Body of pancreas (tissue), 4 donors: ENCODE measurements at regions of chr5 and their contacts with region 1.

Region 1: DNA sequence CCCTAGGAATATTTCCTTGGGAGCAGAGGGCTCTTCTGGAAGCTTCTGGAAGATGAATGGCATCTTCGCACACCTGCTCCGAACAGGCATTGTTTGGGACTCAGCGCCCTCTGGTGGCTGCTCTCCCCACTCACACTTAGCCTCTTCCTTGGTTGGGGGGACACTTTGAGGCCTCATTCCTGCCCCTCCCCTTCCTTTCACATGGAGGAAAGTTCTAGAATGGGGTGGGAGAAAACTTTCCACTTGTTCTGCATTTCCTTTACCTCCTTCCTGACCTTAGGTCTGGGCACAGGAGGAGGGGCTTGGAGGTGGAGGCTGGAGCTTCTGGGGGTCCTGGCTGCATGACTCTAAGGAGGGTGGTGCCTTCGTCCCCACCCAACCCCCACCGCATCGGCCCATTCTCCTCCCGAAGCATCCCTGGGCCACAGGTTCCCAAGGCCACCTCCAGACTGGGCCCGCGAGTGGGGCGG is 19.3 kb upstream of the SMIM32 start:
- DNase-seq: peak; percentile 46 to 69 (median 62)
- ATAC-seq: peak; percentile 67
- H3K4me3 ChIP-seq: no peak overlapping the region
- H3K27ac ChIP-seq: no peak overlapping the region
- H3K4me1 ChIP-seq: no peaks in the 10 kb centered on the region
- H3K27me3 ChIP-seq: peaks cover 0 to 4% of the 10 kb centered on the region in 2 donors
- CTCF ChIP-seq: peak; percentile 73 to 83 (median 78)
- POLR2A ChIP-seq: no peak

Region 2: DNA sequence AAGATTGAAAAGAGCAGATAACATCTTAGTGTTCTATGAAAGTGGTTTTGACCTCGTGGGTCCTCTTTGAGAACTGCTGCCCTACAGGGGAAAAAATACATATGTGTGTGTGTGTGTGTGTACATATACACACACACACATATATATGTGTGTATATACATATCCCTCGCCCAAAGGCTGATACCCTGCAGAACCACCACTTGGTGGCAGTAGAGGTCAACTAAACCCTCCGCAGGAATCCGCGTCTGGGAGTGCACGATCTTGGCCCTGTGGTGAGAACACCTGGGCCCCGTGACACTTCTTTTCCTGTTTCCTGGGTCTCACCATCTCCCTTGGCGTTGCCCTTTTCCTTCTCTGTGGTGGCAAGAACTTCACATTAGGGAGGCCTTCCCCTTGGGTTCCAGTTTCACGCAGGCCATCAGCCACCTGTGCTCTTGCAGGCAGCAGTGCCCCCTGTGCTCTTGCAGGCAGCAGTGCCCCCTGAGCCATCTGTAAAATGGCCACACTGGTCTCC is 324.9 kb before region 1 on chr5:
- intact Hi-C with region 1: loop called (anchors 5 kb)
- DNase-seq: peak; percentile 62 to 68 (median 65)
- ATAC-seq: peak; percentile 84
- H3K4me3 ChIP-seq: no peak overlapping the region
- H3K27ac ChIP-seq: no peak overlapping the region
- H3K4me1 ChIP-seq: peaks cover 19% of the 10 kb centered on the region
- H3K27me3 ChIP-seq: no peaks in the 10 kb centered on the region
- CTCF ChIP-seq: peak; percentile 65 to 84 (median 76)
- POLR2A ChIP-seq: no peak

Region 3: GRCh38 chr5:135930029-135930948 is 282.0 kb before region 1 on chr5:
- intact Hi-C with region 1: no loop called
- DNase-seq: peak in 1 of 4 donors; percentile 8
- ATAC-seq: no peak
- H3K4me3 ChIP-seq: no peak overlapping the region
- H3K27ac ChIP-seq: no peak overlapping the region
- H3K4me1 ChIP-seq: peaks cover 13% of the 10 kb centered on the region
- H3K27me3 ChIP-seq: peaks cover 4 to 9% of the 10 kb centered on the region in 2 donors
- CTCF ChIP-seq: no peak
- POLR2A ChIP-seq: no peak

Region 4: GRCh38 chr5:135944967-135945560 is 267.2 kb before region 1 on chr5:
- intact Hi-C with region 1: loop called (anchors 5 kb)
- DNase-seq: peak; percentile 56 to 73 (median 59)
- ATAC-seq: no peak
- H3K4me3 ChIP-seq: no peak overlapping the region
- H3K27ac ChIP-seq: no peak overlapping the region
- H3K4me1 ChIP-seq: no peaks in the 10 kb centered on the region
- H3K27me3 ChIP-seq: no peaks in the 10 kb centered on the region
- CTCF ChIP-seq: peak; percentile 48 to 84 (median 75)
- POLR2A ChIP-seq: no peak